WTC11 (cell line): ENCODE measurements at regions of chr10 and their contacts with region 1.

Region 1: DNA sequence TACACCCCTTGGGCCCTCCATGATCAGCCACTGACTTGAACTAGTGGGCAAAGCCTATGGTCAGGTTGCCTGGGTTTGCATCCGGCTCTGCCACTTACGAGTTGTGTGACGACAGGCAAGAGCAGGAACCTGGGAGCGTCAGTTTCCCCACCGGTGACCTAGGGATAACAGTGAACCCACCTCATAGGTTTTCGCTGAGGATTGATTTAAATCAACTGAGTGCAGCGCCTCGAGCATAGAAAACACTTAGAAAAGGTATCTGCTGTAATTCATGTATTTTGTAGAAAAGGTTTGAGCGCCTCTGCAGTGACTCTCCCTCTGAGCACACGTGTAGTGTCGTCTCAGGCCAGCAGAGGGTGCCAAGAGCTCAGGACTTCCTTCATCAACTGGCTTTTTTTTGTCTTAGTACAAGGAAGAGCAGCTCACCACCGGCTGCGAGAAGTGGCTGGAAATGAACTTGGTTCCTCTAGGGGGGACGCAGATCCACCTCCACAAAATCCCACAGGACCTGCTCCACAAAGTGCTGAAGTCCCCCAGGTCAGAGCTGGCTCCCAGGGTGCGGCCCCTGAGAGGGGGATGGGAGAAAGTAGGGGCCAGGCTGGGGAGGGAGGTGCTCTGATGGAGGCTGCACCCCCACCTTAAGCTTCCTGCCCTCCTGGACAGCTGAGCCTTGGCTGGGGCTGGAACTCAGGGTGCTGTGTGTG is 27.7 kb downstream of the BTBD16 start:
- DNase-seq: peak; percentile 76
- ATAC-seq: peak; percentile 95
- H3K4me3 Mint-ChIP-seq: peak overlapping the region; percentile 33; the same call in 1 of the 2 replicates
- H3K27ac Mint-ChIP-seq: no peak overlapping the region
- H3K4me1 Mint-ChIP-seq: peaks cover 14% of the 10 kb centered on the region
- H3K27me3 Mint-ChIP-seq: no peaks in the 10 kb centered on the region
- CTCF ChIP-seq: peak; percentile 85

Region 2: DNA sequence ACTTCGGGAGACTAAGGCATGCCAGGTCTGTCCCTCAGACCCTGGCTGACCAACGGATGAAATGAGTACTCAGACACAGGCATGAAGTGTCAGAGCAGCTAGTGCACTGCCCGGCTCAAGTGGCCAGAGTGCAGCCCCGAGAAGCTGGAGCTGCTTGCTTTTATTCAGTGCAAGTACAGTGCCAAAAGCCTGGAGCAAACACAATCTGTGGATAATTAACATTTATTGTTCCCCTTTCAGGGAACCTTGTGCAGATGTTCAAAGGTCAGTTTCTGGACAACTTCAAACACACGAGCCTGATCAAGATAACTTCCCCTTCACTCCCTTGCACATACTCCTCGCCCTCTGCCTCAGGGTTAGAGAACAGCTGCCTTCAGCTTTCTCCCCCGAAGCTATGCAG is 363.0 kb before region 1 on chr10:
- CTCF ChIA-PET with region 1: no interaction called
- POLR2A ChIA-PET with region 1: no interaction called
- DNase-seq: no peak
- ATAC-seq: no peak
- H3K4me3 Mint-ChIP-seq: no peak overlapping the region
- H3K27ac Mint-ChIP-seq: no peak overlapping the region
- H3K4me1 Mint-ChIP-seq: peaks cover 2% of the 10 kb centered on the region; the same call in 1 of the 2 replicates
- H3K27me3 Mint-ChIP-seq: no peaks in the 10 kb centered on the region; the same call in 1 of the 2 replicates
- CTCF ChIP-seq: no peak

Region 3: DNA sequence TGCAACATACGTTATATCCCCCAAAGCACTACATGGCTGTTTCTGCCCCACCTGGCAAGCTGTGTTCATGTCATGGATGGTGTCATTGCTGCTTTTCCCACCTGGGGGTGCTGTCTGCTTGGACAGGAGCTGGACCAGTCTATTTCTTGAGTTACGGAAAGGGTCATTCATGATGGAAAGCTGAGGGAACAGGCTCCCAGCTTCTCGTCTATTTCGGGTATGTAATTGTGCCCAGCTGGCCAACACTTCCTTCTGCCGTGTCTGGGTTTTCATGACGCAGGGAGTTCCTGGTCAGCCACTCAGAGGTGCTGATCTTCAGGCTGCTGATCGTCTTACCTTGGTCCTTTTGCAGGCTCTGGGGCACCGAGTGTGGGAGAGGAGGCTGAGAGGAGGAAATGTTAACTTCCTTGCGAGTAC is 19.0 kb before region 1 on chr10:
- CTCF ChIA-PET with region 1: interaction called, 31 read pairs
- POLR2A ChIA-PET with region 1: no interaction called
- DNase-seq: peak; percentile 79
- ATAC-seq: peak; percentile 80
- H3K4me3 Mint-ChIP-seq: no peak overlapping the region
- H3K27ac Mint-ChIP-seq: no peak overlapping the region
- H3K4me1 Mint-ChIP-seq: peaks cover 8% of the 10 kb centered on the region
- H3K27me3 Mint-ChIP-seq: no peaks in the 10 kb centered on the region
- CTCF ChIP-seq: peak; percentile 65

Region 4: GRCh38 chr10:122323186-122323585 is 24.4 kb after region 1 on chr10:
- CTCF ChIA-PET with region 1: interaction called, 11 read pairs
- POLR2A ChIA-PET with region 1: no interaction called
- DNase-seq: no peak
- ATAC-seq: no peak
- H3K4me3 Mint-ChIP-seq: no peak overlapping the region
- H3K27ac Mint-ChIP-seq: no peak overlapping the region
- H3K4me1 Mint-ChIP-seq: peaks cover 7% of the 10 kb centered on the region; the same call in 1 of the 2 replicates
- H3K27me3 Mint-ChIP-seq: no peaks in the 10 kb centered on the region; the same call in 1 of the 2 replicates
- CTCF ChIP-seq: no peak

Region 5: GRCh38 chr10:122435212-122435827 is 136.6 kb after region 1 on chr10:
- CTCF ChIA-PET with region 1: interaction called, 86 read pairs
- POLR2A ChIA-PET with region 1: interaction called, 3 read pairs
- DNase-seq: no peak
- ATAC-seq: no peak
- H3K4me3 Mint-ChIP-seq: no peak overlapping the region
- H3K27ac Mint-ChIP-seq: no peak overlapping the region
- H3K4me1 Mint-ChIP-seq: no peaks in the 10 kb centered on the region
- H3K27me3 Mint-ChIP-seq: no peaks in the 10 kb centered on the region
- CTCF ChIP-seq: peak; percentile 64

Region 6: GRCh38 chr10:122565728-122566206 is 267.0 kb after region 1 on chr10:
- CTCF ChIA-PET with region 1: interaction called, 58 read pairs
- POLR2A ChIA-PET with region 1: no interaction called
- DNase-seq: peak; percentile 82
- ATAC-seq: peak; percentile 71
- H3K4me3 Mint-ChIP-seq: no peak overlapping the region
- H3K27ac Mint-ChIP-seq: no peak overlapping the region
- H3K4me1 Mint-ChIP-seq: peaks cover 9% of the 10 kb centered on the region
- H3K27me3 Mint-ChIP-seq: peaks cover 5% of the 10 kb centered on the region; the same call in 1 of the 2 replicates
- CTCF ChIP-seq: peak; percentile 75